ENCODE measurements at regions of chr2 and their contacts with region 1.

Region 1: GRCh38 chr2:42828487-42829425 is 36.4 kb upstream of the HAAO start:
- DNase-seq: peak; percentile 78 to 88 (median 82)
- ATAC-seq: peak; percentile 96
- H3K4me3 ChIP-seq: no peak overlapping the region
- H3K27ac ChIP-seq: no peak overlapping the region
- H3K4me1 ChIP-seq: peaks cover 3 to 9% of the 10 kb centered on the region in 2 experiments; a peak in 2 of 5 replicates
- H3K27me3 ChIP-seq: no peaks in the 10 kb centered on the region; a peak in 1 of 5 replicates
- CTCF ChIP-seq: peak; percentile 89 to 97 (median 95)
- EP300 ChIP-seq: no peak
- POLR2A ChIP-seq: no peak
- RAD21 ChIP-seq: peak; percentile 81 to 94

Region 2: GRCh38 chr2:42286268-42286946 is 542.3 kb before region 1 on chr2:
- CTCF ChIA-PET with region 1: no interaction called
- POLR2A ChIA-PET with region 1: no interaction called
- in situ Hi-C with region 1: no loop called
- intact Hi-C with region 1: no loop called
- DNase-seq: no peak
- ATAC-seq: no peak
- H3K4me3 ChIP-seq: no peak overlapping the region
- H3K27ac ChIP-seq: no peak overlapping the region
- H3K4me1 ChIP-seq: no peaks in the 10 kb centered on the region
- H3K27me3 ChIP-seq: no peaks in the 10 kb centered on the region
- CTCF ChIP-seq: no peak
- EP300 ChIP-seq: no peak
- POLR2A ChIP-seq: no peak
- RAD21 ChIP-seq: no peak

Region 3: DNA sequence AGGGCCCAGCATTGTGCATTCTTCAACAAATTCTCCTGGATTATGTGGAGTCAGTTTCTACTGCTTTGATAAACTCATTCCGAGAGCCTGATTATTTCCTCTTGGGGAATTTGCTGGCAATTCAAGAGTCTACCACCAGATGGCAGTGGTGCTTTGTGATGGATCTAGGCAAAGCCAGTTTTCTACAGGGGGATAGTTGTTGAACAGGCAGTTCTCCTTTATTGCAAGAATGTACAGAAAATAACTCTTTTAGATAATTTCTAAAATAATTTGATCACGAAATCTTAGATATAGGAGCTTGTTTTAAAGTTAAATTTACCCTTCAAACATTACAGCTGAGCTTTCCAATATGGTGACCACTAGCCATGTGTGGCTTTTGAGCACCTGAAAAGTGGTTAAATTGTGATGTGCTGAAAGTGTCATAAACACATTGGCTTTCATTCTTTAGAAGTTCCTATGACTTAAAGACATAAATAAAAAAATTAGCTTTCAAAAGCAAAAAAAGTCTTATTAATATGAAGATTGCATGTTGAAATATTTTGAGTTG is 30.3 kb after region 1 on chr2:
- CTCF ChIA-PET with region 1: no interaction called
- POLR2A ChIA-PET with region 1: no interaction called
- in situ Hi-C with region 1: no loop called
- intact Hi-C with region 1: loop called (anchors 1 kb)
- DNase-seq: peak; percentile 78 to 85 (median 81)
- ATAC-seq: peak; percentile 72
- H3K4me3 ChIP-seq: no peak overlapping the region
- H3K27ac ChIP-seq: no peak overlapping the region
- H3K4me1 ChIP-seq: peaks cover 0 to 15% of the 10 kb centered on the region in 2 experiments; a peak in 3 of 5 replicates
- H3K27me3 ChIP-seq: no peaks in the 10 kb centered on the region
- CTCF ChIP-seq: peak; percentile 85 to 97 (median 86)
- EP300 ChIP-seq: no peak
- POLR2A ChIP-seq: no peak
- RAD21 ChIP-seq: peak; percentile 98 to 99

Region 4: GRCh38 chr2:42944779-42945415 is 116.1 kb after region 1 on chr2:
- CTCF ChIA-PET with region 1: interaction called, 3 read pairs
- POLR2A ChIA-PET with region 1: no interaction called
- in situ Hi-C with region 1: no loop called
- intact Hi-C with region 1: loop called (anchors 5 kb)
- DNase-seq: peak in 2 of 4 experiments; percentile 44 to 47
- ATAC-seq: peak; percentile 76
- H3K4me3 ChIP-seq: no peak overlapping the region
- H3K27ac ChIP-seq: no peak overlapping the region
- H3K4me1 ChIP-seq: peaks cover 2 to 18% of the 10 kb centered on the region in 2 experiments; a peak in 4 of 5 replicates
- H3K27me3 ChIP-seq: no peaks in the 10 kb centered on the region
- CTCF ChIP-seq: no peak
- EP300 ChIP-seq: no peak
- POLR2A ChIP-seq: no peak
- RAD21 ChIP-seq: no peak

Region 5: GRCh38 chr2:43131024-43131889 is 302.5 kb after region 1 on chr2:
- CTCF ChIA-PET with region 1: no interaction called
- POLR2A ChIA-PET with region 1: no interaction called
- in situ Hi-C with region 1: loop called (anchors 25 kb)
- intact Hi-C with region 1: loop called (anchors 5 kb)
- DNase-seq: peak; percentile 76 to 79 (median 77)
- ATAC-seq: peak; percentile 83
- H3K4me3 ChIP-seq: no peak overlapping the region
- H3K27ac ChIP-seq: peak overlapping the region; percentile 45; the same call in 2 of the 3 replicates
- H3K4me1 ChIP-seq: peaks cover 23 to 47% of the 10 kb centered on the region in 2 experiments; a peak in 4 of 5 replicates
- H3K27me3 ChIP-seq: no peaks in the 10 kb centered on the region
- CTCF ChIP-seq: peak; percentile 64 to 71 (median 66)
- EP300 ChIP-seq: peak; percentile 5; the same call in 1 of the 2 replicates
- POLR2A ChIP-seq: no peak
- RAD21 ChIP-seq: peak; percentile 54 to 83

Region 6: DNA sequence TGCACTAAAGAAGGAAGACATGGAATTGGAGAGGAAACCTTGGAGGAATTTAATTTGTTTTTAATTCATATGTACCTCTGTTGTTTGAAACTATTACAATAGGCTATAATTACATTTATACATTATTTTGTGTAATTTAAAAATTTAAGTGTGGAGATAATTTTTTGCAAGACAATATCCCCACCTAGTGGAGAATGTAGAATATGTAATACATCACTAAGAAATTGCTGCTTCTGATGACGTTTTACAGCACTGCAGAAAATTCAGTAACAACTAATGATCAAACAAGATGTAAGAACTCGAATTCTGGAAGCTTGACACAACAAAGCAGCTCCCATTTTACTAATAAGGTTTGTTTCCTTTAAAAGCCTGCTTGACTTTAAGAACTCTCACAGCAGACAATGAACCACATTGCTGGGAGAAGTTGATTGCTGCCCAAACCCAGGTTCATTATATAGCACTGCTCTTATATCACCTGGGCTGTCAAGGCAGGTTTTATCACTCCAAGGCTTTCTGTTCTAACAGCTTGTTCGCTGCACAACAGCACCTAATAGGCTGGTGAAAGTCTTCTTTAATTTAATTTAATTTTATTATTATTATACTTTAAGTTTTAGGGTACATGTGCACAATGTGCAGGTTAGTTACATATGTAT is 713.7 kb after region 1 on chr2:
- CTCF ChIA-PET with region 1: interaction called, 19 read pairs
- POLR2A ChIA-PET with region 1: no interaction called
- in situ Hi-C with region 1: no loop called
- intact Hi-C with region 1: loop called (anchors 1 kb)
- DNase-seq: peak; percentile 20 to 38 (median 32)
- ATAC-seq: peak; percentile 70
- H3K4me3 ChIP-seq: no peak overlapping the region
- H3K27ac ChIP-seq: no peak overlapping the region
- H3K4me1 ChIP-seq: peaks cover 0 to 4% of the 10 kb centered on the region in 2 experiments; a peak in 1 of 5 replicates
- H3K27me3 ChIP-seq: no peaks in the 10 kb centered on the region
- CTCF ChIP-seq: peak in 2 of 3 experiments; percentile 36 to 72; a peak in 4 of 6 replicates
- EP300 ChIP-seq: no peak
- POLR2A ChIP-seq: no peak
- RAD21 ChIP-seq: peak; percentile 61 to 74

Region 7: DNA sequence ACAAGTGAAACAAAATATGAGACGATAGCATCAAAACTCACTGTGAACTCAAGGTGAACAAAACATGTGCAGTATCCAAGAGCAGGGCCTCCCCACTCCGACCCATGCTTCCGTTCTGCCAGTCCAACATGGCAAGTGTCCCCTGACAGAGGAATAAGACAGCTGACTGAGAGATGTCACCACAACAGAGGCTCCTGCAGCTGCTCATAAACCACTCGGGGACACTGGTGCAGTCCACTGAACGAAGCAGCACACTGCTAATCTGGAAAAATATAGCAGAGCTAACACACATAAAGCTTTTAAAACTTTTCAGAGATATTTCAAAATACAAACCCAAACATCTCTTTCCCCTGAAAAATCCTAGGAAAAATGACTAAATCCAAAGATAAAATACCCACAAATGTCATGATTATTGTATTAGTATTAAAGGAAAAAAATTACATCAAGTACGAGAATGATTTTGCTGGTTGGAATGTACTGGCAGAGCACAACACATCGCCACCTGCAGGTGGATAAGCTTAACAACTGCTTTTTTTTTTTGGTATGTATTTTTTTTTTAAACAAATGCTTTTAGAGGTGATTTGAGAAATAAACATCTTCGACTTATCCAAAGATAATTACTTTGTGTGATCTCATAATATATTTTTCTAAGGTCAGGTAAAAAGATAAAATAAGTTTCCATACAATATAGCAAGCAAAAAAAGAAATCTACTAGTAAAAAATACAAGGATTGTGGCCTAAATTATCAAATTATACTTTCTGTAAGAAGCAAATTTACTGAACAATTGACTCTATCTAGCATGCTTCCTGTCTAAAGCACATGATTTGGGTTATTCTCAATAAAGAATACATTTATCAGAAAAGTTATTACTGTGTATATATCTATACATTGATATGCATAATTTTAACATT is 748.5 kb after region 1 on chr2:
- CTCF ChIA-PET with region 1: interaction called, 16 read pairs
- POLR2A ChIA-PET with region 1: interaction called, 4 read pairs
- in situ Hi-C with region 1: no loop called
- intact Hi-C with region 1: no loop called
- DNase-seq: peak; percentile 40 to 59 (median 46)
- ATAC-seq: peak; percentile 70
- H3K4me3 ChIP-seq: no peak overlapping the region
- H3K27ac ChIP-seq: 0 out of 3 replicates have a peak overlapping the region, but pooled peaks have one; percentile 1
- H3K4me1 ChIP-seq: peaks cover 0 to 2% of the 10 kb centered on the region in 2 experiments; a peak in 2 of 5 replicates
- H3K27me3 ChIP-seq: no peaks in the 10 kb centered on the region
- CTCF ChIP-seq: peak; percentile 51 to 84 (median 71)
- EP300 ChIP-seq: no peak
- POLR2A ChIP-seq: no peak
- RAD21 ChIP-seq: peak; percentile 13 to 36; a peak in 1 of 4 replicates

Region 8: GRCh38 chr2:43611987-43612894 is 783.5 kb after region 1 on chr2:
- CTCF ChIA-PET with region 1: interaction called, 23 read pairs
- POLR2A ChIA-PET with region 1: no interaction called
- in situ Hi-C with region 1: no loop called
- intact Hi-C with region 1: loop called (anchors 1 kb)
- DNase-seq: peak; percentile 68 to 81 (median 73)
- ATAC-seq: peak; percentile 95
- H3K4me3 ChIP-seq: no peak overlapping the region
- H3K27ac ChIP-seq: no peak overlapping the region
- H3K4me1 ChIP-seq: peaks cover 0 to 2% of the 10 kb centered on the region in 2 experiments; a peak in 1 of 5 replicates
- H3K27me3 ChIP-seq: no peaks in the 10 kb centered on the region
- CTCF ChIP-seq: peak; percentile 68 to 86 (median 84)
- EP300 ChIP-seq: no peak
- POLR2A ChIP-seq: no peak
- RAD21 ChIP-seq: peak; percentile 63 to 85

Measured in K562 (cell line).